Activated CD8-positive, alpha-beta memory T cell treated with anti-CD3 and anti-CD28 coated beads, Interleukin-2, amount 10 ng/mL, durations not matched to agents 7 days and 5 days (primary cell): ENCODE measurements at regions of chr2 and their contacts with region 1.

Region 1: DNA sequence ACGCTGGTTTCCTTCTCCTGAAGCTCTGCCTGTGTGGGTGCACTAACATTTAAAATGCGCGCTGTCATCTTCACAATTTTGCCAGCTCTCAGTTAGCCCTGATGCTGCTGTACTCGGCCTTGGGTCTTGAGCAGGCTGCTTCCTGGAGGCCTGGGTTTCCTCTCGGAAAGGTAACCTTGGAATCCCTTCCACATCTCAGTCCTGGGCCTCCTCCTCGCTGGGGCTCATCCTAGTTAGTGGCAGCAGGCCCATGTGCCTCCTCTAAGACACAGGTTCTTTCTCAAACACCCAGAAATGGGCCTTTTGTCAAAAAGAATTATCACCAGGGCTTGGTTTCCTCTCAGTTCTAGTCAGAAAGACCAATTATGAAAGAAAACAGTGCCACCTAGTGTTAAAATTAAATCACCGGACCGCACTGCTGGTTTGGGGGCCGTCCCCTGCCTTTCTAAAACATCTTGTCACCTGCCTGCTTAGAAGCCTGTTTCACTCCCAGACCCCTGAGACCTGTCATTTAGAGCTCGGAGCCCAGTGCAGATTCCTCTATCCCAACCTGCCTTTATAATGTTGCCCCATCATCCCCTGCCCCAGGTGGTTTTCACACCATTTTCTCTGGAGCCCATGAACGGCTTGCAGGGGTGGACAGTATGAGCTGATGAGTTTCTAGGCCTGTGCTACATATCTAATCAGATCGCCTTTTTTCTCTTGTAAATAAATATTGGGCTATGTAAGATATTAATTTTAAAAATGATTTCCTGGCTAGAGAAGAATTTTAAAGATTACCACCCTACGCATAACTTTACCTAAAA is 42.4 kb downstream of the HK2 start:
- DNase-seq: peak; percentile 57
- ATAC-seq: peak; percentile 88
- H3K4me3 Mint-ChIP-seq: no peak overlapping the region
- H3K27ac Mint-ChIP-seq: peak overlapping the region; percentile 33
- H3K4me1 Mint-ChIP-seq: peaks cover 3% of the 10 kb centered on the region
- H3K27me3 Mint-ChIP-seq: no peaks in the 10 kb centered on the region

Region 2: GRCh38 chr2:74691955-74692354 is 184.3 kb before region 1 on chr2:
- CTCF ChIA-PET with region 1: interaction called, 11 read pairs
- DNase-seq: no peak
- ATAC-seq: no peak
- H3K4me3 Mint-ChIP-seq: no peak overlapping the region
- H3K27ac Mint-ChIP-seq: no peak overlapping the region
- H3K4me1 Mint-ChIP-seq: no peaks in the 10 kb centered on the region
- H3K27me3 Mint-ChIP-seq: peaks cover 9% of the 10 kb centered on the region

Region 3: GRCh38 chr2:74715078-74715791 is 161.0 kb before region 1 on chr2:
- CTCF ChIA-PET with region 1: interaction called, 93 read pairs
- DNase-seq: peak; percentile 86
- ATAC-seq: peak; percentile 97
- H3K4me3 Mint-ChIP-seq: peak overlapping the region; percentile 77
- H3K27ac Mint-ChIP-seq: no peak overlapping the region
- H3K4me1 Mint-ChIP-seq: peaks cover 9% of the 10 kb centered on the region
- H3K27me3 Mint-ChIP-seq: peaks cover 27% of the 10 kb centered on the region

Region 4: GRCh38 chr2:74833418-74834233 is 42.7 kb before region 1 on chr2 and contains the start of gene HK2:
- CTCF ChIA-PET with region 1: interaction called, 71 read pairs
- DNase-seq: peak; percentile 88
- ATAC-seq: peak; percentile 92
- H3K4me3 Mint-ChIP-seq: peak within 1 kb of the TSS; percentile 89
- H3K27ac Mint-ChIP-seq: peak within 1 kb of the TSS; percentile 91
- H3K4me1 Mint-ChIP-seq: peaks cover 46% of the 10 kb centered on the region
- H3K27me3 Mint-ChIP-seq: peaks cover 10% of the 10 kb centered on the region
- total RNA-seq, gene HK2: 32.2 to 45.8 TPM